Activated CD4-positive, alpha-beta T cell treated with anti-CD3 and anti-CD28 coated beads for 36 hours (primary cell): ENCODE measurements at regions of chr1 and their contacts with region 1.

Region 1: GRCh38 chr1:25997828-25998761 is at the start of gene PAFAH2:
- DNase-seq: peak; percentile 99
- ATAC-seq: peak; percentile 98
- H3K4me3 Mint-ChIP-seq: peak within 1 kb of the TSS; percentile 98
- H3K27ac Mint-ChIP-seq: peak within 1 kb of the TSS; percentile 98
- H3K4me1 Mint-ChIP-seq: peaks cover 28% of the 10 kb centered on the region
- H3K27me3 Mint-ChIP-seq: no peaks in the 10 kb centered on the region
- total RNA-seq, gene PAFAH2: 6.6 to 7.9 TPM

Region 2: GRCh38 chr1:25549273-25550154 is 448.6 kb before region 1 on chr1:
- CTCF ChIA-PET with region 1: interaction called, 4 read pairs
- POLR2A ChIA-PET with region 1: no interaction called
- intact Hi-C with region 1: loop called in 1 of 2 experiments (anchors 1 kb)
- DNase-seq: peak; percentile 90
- ATAC-seq: peak; percentile 96
- H3K4me3 Mint-ChIP-seq: peak overlapping the region; percentile 69
- H3K27ac Mint-ChIP-seq: peak overlapping the region; percentile 98
- H3K4me1 Mint-ChIP-seq: peaks cover 90% of the 10 kb centered on the region
- H3K27me3 Mint-ChIP-seq: no peaks in the 10 kb centered on the region

Region 3: DNA sequence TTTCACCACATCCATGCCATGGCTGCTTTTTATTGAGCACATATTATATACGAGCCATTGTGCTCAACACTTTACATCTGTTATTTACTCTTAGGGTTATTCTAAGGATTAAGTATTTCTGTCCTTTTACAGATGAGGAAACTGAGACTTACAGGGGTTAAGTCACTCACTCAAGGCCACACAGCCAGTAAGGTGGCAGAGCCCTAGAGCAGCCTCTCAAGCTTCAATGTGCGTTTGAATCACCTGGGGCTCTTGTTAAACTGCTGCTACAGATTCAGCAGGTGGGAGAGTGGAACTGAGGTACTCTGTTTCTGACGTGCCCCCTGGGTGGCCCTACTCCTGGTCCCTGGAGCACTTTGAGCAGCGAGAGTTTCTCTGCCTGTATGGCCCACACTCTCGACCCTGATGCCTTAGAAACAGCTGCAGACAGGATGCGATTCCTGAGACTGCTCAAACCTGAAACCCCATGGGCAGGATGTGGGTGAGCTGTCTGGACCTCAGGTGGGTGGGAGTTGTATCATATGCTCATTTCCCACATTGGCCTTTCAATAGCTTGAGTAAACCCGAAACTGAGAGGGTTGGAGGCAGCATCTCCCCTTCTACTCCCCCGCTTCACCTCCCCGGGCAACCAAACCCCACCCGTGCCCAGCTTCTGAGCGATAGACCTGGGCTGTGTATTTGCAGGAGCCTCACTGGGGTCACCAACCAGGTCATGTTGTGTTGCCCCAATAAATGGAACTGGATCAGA is 322.2 kb before region 1 on chr1:
- CTCF ChIA-PET with region 1: no interaction called
- POLR2A ChIA-PET with region 1: no interaction called
- intact Hi-C with region 1: no loop called
- DNase-seq: peak; percentile 94
- ATAC-seq: peak; percentile 85
- H3K4me3 Mint-ChIP-seq: peak overlapping the region; percentile 50
- H3K27ac Mint-ChIP-seq: peak overlapping the region; percentile 78
- H3K4me1 Mint-ChIP-seq: peaks cover 89% of the 10 kb centered on the region
- H3K27me3 Mint-ChIP-seq: peaks cover 2% of the 10 kb centered on the region

Region 4: DNA sequence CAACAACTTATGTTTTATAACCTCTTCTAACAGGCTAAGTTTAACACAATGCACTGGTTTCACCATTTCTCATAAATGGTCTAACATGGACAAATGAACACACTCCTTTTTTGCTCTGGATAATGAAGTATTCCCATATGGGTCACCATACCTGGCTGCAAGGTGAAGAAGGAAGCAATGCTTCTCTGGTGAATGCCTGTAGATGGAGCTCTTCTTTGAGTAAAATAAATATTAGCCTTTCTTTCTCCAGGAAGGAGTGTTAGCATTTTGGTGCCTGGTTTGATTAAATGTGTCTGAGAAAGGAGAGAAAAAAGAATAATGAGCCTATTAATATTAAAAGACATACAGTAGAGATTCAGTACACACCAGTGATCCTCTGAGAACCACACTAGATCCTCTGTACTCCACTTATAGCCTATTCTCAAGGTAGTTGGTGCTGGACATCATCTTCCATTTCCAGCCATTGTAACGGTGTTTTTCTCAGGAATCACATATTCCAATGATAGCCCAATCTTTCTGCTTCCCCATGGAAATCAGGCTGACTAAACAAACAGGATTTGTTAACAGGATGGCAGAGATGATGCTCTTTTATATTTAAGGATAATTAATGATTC is 160.7 kb before region 1 on chr1:
- CTCF ChIA-PET with region 1: interaction called, 3 read pairs
- POLR2A ChIA-PET with region 1: no interaction called
- intact Hi-C with region 1: loop called in 1 of 2 experiments (anchors 1 kb)
- DNase-seq: no peak
- ATAC-seq: no peak
- H3K4me3 Mint-ChIP-seq: no peak overlapping the region
- H3K27ac Mint-ChIP-seq: no peak overlapping the region
- H3K4me1 Mint-ChIP-seq: peaks cover 4% of the 10 kb centered on the region
- H3K27me3 Mint-ChIP-seq: no peaks in the 10 kb centered on the region

Region 5: DNA sequence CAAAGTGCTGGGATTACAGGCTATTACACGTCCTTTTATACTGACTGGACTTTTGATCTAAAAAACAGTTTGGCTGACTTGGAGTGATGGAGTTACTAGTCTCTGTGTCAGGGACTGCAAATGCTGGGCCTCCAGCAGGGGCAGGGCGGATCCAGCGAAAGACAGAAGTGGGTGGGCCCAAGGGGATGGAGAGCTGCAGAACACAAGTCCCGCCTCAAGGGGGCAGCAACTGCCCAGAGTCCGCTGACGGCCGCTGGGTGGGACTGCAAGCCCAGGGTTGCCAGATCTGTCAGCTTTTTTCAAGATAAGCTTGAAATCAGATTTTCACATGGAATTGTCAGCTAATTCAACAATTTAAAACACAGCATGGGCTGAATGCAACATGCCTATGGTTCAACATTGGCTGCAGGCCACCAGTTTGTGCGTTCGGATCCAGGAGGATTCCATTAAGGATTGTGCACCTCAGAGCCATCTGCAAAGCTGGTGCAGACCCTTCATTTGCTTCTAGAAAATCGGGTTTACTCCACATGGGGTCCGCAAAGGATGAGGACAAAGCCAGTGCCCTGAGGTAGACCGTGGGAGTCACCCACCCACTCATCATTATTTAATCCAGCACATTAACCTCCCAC is 102.6 kb before region 1 on chr1:
- CTCF ChIA-PET with region 1: interaction called, 257 read pairs
- POLR2A ChIA-PET with region 1: interaction called, 27 read pairs
- intact Hi-C with region 1: loop called (anchors 1 kb)
- DNase-seq: peak; percentile 95
- ATAC-seq: peak; percentile 98
- H3K4me3 Mint-ChIP-seq: no peak overlapping the region
- H3K27ac Mint-ChIP-seq: no peak overlapping the region
- H3K4me1 Mint-ChIP-seq: peaks cover 15% of the 10 kb centered on the region
- H3K27me3 Mint-ChIP-seq: no peaks in the 10 kb centered on the region

Region 6: GRCh38 chr1:26035959-26036755 is 38.1 kb after region 1 on chr1:
- CTCF ChIA-PET with region 1: interaction called, 9 read pairs
- POLR2A ChIA-PET with region 1: no interaction called
- intact Hi-C with region 1: loop called in 1 of 2 experiments (anchors 1 kb)
- DNase-seq: peak; percentile 86
- ATAC-seq: peak; percentile 76
- H3K4me3 Mint-ChIP-seq: peak overlapping the region; percentile 80
- H3K27ac Mint-ChIP-seq: peak overlapping the region; percentile 78
- H3K4me1 Mint-ChIP-seq: peaks cover 13% of the 10 kb centered on the region
- H3K27me3 Mint-ChIP-seq: peaks cover 6% of the 10 kb centered on the region